ENCODE measurements at regions of chr20 and their contacts with region 1.

Region 1: DNA sequence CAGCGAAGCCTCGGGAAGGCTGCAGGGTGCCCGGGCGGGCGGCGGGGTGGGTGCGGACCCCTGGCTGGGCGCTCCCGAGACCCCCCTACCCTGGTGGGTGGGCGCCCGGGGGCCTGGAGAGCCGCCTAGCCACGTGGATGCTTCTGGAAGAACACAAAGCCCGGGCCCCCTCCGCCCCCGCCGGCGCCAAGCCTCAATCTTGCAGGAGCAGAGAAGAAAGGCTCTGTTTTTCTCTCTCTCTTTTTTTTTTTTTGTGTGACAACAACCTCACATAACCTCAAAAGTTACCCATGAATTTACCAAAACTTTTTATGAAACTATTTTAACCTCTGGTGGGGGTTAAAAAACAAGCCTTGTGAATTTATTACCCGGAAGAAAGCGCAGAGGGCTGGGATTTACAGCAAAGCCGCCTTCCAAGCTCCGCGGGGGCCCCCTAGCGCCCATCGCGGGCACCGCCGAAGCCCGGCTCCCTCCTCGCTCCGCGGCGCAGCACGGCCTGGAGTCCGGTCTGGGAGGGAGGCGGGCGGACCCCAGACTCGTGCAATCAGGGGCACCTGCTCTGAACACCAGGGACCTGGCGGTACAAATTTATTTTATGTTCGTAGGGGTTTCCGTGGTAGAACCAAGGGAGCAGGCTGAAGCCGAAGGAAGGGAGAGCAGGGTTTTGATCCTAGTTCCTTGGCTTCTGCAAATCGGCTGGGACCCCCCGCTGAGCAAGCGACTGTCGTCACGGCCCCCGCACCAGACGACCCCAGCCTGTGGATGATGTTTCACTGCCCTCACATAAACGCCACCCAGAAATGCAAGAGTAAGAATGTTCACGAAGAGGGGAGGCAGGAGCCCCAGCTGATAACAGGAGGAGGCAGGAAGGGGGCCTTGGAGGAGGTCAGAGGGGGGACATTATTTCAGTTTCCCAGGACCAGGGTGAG is 58.9 kb downstream of the ZNF831 start:
- DNase-seq: peak; percentile 63
- H3K4me3 ChIP-seq: no peak overlapping the region
- H3K27ac ChIP-seq: no peak overlapping the region
- H3K4me1 ChIP-seq: no peaks in the 10 kb centered on the region
- CTCF ChIP-seq: peak; percentile 98

Region 2: DNA sequence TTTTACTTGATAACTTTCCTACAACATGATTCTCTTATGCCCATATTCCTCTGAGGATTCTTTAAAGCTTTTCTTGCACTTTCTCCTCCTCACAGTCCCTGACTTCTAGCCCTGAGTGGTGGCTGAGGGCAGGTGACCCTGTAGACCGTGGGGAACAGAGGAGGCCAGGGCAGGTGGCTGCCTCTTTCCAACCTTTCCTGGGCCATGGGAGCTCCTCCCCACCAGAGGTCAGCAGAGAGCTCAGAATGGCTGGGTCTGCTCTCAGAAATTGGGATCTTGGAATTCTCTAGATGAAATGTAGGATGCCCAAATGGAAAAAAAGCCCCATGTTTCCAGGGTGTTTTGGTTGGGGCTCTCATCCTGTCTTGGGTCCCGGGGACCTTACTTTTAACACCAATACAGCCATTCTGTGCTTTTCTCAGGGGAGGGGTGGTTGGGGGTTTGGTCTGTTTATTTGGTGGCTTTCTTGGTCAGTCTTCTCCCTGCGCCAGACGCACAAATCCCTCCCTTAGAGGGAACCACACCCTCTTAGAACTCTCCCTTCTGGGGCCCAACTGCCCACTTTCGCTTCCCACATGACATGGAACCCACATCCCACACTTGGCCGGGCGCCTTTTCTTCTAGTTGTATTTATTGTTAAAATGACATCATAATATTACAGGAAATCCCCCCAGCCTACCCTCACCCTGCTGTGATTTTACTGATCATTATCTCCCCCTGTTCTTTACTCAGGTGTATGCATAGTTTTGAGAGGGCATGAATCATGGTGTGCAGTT is 352.1 kb before region 1 on chr20:
- CTCF ChIA-PET with region 1: no interaction called
- POLR2A ChIA-PET with region 1: no interaction called
- intact Hi-C with region 1: loop called (anchors 1 kb)
- DNase-seq: peak; percentile 65
- H3K4me3 ChIP-seq: no peak overlapping the region
- H3K27ac ChIP-seq: no peak overlapping the region
- H3K4me1 ChIP-seq: peaks cover 16% of the 10 kb centered on the region
- CTCF ChIP-seq: peak; percentile 95

Region 3: DNA sequence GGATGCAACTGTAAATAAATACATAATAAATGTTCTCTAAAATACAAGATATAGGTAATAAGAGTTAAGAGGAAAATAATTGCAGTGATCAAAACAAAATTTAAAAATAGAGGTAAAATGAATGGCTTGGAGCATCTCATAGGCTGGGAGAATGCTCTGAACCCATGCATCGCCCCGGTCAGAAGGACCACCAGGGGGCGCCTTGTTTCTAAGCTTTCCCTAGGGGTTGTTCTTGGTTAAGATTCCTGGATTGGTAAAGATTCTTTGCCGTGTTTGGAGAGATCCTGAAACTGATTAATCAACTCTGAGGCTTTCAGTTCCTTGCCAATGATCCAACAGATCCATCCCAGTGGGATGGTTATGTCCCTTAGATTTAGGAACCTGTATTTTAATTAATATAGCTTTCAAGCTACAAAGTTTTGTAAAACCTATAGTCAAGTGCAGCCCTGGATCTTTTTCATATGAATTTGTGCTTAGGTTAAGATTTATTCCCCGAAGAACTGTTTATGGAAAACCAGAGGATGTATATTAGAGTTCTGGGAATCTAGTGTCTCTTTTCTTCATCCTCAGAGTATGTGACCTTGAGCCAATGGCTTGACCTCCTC is 134.6 kb before region 1 on chr20:
- CTCF ChIA-PET with region 1: interaction called, 4 read pairs
- POLR2A ChIA-PET with region 1: no interaction called
- intact Hi-C with region 1: loop called (anchors 2 kb)
- DNase-seq: peak; percentile 79
- H3K4me3 ChIP-seq: no peak overlapping the region
- H3K27ac ChIP-seq: no peak overlapping the region
- H3K4me1 ChIP-seq: no peaks in the 10 kb centered on the region
- CTCF ChIP-seq: peak; percentile 99

Region 4: DNA sequence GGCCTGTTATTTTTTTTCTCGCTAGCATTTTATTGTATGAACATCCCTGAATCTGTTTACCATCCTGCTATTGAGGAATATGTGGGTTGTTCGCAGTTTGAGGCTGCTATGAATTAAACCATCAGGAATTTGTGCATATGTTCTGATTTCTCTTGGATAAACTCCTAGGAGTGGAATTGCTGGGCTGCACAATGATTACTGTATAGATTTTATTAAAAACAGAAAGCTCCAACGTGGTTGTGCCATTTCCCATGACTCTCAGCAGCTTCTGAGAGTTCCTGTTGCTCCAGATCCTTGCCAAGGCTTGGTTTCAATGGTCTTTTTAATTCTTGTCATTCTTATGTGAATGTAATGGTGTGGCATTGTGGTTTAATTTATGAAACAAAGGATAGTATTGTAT is 153.0 kb after region 1 on chr20:
- CTCF ChIA-PET with region 1: no interaction called
- POLR2A ChIA-PET with region 1: interaction called, 10 read pairs
- intact Hi-C with region 1: no loop called
- DNase-seq: no peak
- H3K4me3 ChIP-seq: no peak overlapping the region
- H3K27ac ChIP-seq: no peak overlapping the region
- H3K4me1 ChIP-seq: no peaks in the 10 kb centered on the region
- CTCF ChIP-seq: no peak

Region 5: DNA sequence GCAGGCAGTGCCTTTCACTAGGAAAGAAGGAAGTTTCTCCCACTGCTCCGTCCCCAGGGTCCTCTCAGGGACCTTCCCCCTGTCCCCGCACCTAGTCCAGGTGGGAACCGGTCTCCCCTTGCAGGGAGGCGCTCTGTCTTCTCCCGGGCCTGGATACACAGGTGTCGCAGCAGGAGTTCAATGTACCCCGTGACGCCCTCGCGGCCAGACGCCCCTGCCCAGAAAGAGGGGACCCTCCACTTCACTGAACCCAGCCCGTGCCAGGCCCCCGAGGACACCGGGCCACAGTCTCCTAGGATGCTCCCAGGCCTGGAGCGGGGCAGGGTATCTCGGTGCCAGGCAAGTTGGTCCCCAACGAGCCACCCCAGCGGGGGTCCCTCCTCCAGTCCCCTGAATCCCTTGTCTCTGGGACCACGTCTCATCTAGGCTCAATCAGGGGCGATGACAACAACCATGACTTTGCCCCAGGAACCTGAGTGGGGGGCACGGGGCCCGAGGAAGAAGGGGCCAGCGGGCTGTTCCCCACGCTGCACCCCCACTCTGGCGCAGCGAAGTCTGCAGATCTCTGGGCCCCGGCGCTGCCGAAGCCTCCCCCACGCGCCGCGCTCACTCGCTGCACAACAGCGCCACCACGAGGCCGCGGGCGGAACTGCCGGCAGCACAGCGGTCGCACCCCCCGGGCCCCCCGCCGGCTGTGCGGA is 180.9 kb after region 1 on chr20:
- CTCF ChIA-PET with region 1: no interaction called
- POLR2A ChIA-PET with region 1: no interaction called
- intact Hi-C with region 1: loop called (anchors 10 kb)
- DNase-seq: peak; percentile 39
- H3K4me3 ChIP-seq: no peak overlapping the region
- H3K27ac ChIP-seq: no peak overlapping the region
- H3K4me1 ChIP-seq: no peaks in the 10 kb centered on the region
- CTCF ChIP-seq: peak; percentile 95

Measured in OCI-LY7 (cell line).